Common myeloid progenitor, CD34-positive (primary cell): ENCODE measurements at regions of chr2 and their contacts with region 1.

Region 1: DNA sequence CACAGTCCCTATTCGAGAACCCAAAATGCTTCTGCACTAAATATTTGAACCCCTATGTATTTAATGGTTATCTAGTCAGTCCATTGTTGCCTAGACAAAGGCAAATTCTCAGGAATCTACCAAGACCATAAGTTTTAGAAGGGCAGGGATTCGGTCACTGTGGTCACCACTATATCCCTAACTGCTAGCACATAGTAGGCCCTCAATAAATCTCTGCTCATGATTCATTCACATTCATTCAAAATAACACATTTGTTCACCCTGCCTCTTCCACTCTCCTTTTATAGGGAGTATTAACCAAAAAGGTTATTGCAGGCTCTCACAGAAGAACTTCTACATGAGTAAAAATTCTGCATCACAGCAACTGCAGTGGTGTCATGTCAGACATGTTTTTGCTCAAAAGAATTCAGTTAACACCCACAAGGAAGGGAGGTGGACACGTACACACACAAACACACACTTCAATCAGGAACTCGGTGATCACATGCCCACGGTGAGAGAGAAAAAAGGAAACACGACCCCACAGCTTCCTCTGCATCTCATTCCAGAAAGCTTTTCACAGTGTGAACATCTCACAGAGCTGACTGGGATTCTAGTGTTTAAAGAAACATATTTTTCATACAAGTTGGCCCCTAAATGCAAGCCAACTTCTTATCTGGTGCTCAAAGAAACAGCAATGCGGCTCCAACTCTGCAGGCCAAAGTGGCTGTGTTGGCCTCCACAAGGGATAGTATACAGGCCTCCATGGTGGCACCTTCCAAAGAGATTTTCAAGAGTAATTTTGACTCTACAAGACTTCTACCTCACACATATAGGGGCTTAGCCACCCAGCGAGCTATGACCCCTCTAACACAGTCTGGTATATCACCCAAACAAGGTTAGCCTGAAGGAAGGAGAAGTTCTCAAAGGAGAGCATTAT is 98.0 kb downstream of the ANKRD44 start:
- DNase-seq: peak in 2 of 3 donors; percentile 66 to 77
- H3K4me3 ChIP-seq: peak overlapping the region in 5 of 7 experiments; percentile 15 to 46 (median 23)
- H3K27ac ChIP-seq: peak overlapping the region in 1 of 2 experiments; percentile 29
- H3K4me1 ChIP-seq: peaks cover 55 to 90% (median 74%) of the 10 kb centered on the region in 4 experiments
- H3K27me3 ChIP-seq: no peaks in the 10 kb centered on the region

Region 2: GRCh38 chr2:196853301-196854087 is 359.1 kb before region 1 on chr2:
- CTCF ChIA-PET with region 1: no interaction called
- POLR2A ChIA-PET with region 1: no interaction called
- DNase-seq: no peak
- H3K4me3 ChIP-seq: no peak overlapping the region
- H3K27ac ChIP-seq: no peak overlapping the region
- H3K4me1 ChIP-seq: peaks cover 0 to 2% (median 0%) of the 10 kb centered on the region in 4 experiments
- H3K27me3 ChIP-seq: no peaks in the 10 kb centered on the region

Region 3: DNA sequence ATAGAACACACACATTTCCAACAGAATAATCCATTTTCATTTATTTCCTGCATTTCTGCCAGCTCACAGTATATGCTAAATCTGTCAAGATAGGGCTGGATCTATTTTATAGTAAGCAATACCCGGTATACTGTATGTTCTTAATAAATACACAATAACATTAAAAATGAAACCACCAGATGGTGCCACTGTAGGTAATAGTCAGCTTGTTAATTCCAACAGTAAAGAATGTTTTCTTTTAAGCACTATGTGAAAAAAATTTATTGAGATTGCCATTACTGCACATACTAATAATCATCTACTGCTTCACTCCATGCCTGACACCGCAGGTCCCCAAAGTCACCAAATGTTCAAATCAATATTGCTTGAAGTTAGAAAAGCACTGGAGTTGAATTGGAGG is 154.6 kb before region 1 on chr2:
- CTCF ChIA-PET with region 1: no interaction called
- POLR2A ChIA-PET with region 1: no interaction called
- DNase-seq: no peak
- H3K4me3 ChIP-seq: no peak overlapping the region
- H3K27ac ChIP-seq: no peak overlapping the region
- H3K4me1 ChIP-seq: no peaks in the 10 kb centered on the region
- H3K27me3 ChIP-seq: no peaks in the 10 kb centered on the region

Region 4: GRCh38 chr2:197130318-197130717 is 82.3 kb before region 1 on chr2:
- CTCF ChIA-PET with region 1: no interaction called
- POLR2A ChIA-PET with region 1: no interaction called
- DNase-seq: peak; percentile 11 to 52 (median 47)
- H3K4me3 ChIP-seq: no peak overlapping the region
- H3K27ac ChIP-seq: peak overlapping the region in 1 of 2 experiments; percentile 38
- H3K4me1 ChIP-seq: peaks cover 0 to 14% (median 3%) of the 10 kb centered on the region in 4 experiments
- H3K27me3 ChIP-seq: no peaks in the 10 kb centered on the region

Region 5: GRCh38 chr2:197198890-197199289 is 13.7 kb before region 1 on chr2:
- CTCF ChIA-PET with region 1: interaction called, 13 read pairs
- POLR2A ChIA-PET with region 1: interaction called, 4 read pairs
- DNase-seq: peak; percentile 96 to 99 (median 99)
- H3K4me3 ChIP-seq: peak overlapping the region; percentile 14 to 73 (median 51)
- H3K27ac ChIP-seq: peak overlapping the region; percentile 40 to 71
- H3K4me1 ChIP-seq: peaks cover 39 to 70% (median 59%) of the 10 kb centered on the region in 4 experiments
- H3K27me3 ChIP-seq: no peaks in the 10 kb centered on the region

Region 6: DNA sequence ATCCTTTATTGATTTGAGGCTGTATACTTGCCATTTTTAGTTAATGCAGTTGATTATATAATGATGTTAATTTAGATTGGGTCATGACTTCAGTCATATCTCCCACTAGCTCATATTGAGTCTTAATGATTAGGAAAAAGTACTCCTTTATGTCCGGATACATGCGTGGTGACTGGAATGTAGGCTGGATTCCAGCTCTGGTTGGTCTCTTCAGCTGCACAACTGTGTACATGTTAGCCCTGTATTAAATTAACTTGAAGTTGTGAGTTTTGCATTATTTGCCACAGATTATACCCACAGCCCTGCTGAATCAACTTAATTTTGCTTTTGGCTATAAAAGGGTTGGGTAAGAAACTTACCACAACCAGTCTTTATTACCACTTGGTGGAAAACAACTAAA is 325.8 kb after region 1 on chr2:
- CTCF ChIA-PET with region 1: no interaction called
- POLR2A ChIA-PET with region 1: no interaction called
- DNase-seq: no peak
- H3K4me3 ChIP-seq: no peak overlapping the region
- H3K27ac ChIP-seq: no peak overlapping the region
- H3K4me1 ChIP-seq: no peaks in the 10 kb centered on the region
- H3K27me3 ChIP-seq: no peaks in the 10 kb centered on the region